ENCODE measurements at regions of chr4 and their contacts with region 1.

Region 1: DNA sequence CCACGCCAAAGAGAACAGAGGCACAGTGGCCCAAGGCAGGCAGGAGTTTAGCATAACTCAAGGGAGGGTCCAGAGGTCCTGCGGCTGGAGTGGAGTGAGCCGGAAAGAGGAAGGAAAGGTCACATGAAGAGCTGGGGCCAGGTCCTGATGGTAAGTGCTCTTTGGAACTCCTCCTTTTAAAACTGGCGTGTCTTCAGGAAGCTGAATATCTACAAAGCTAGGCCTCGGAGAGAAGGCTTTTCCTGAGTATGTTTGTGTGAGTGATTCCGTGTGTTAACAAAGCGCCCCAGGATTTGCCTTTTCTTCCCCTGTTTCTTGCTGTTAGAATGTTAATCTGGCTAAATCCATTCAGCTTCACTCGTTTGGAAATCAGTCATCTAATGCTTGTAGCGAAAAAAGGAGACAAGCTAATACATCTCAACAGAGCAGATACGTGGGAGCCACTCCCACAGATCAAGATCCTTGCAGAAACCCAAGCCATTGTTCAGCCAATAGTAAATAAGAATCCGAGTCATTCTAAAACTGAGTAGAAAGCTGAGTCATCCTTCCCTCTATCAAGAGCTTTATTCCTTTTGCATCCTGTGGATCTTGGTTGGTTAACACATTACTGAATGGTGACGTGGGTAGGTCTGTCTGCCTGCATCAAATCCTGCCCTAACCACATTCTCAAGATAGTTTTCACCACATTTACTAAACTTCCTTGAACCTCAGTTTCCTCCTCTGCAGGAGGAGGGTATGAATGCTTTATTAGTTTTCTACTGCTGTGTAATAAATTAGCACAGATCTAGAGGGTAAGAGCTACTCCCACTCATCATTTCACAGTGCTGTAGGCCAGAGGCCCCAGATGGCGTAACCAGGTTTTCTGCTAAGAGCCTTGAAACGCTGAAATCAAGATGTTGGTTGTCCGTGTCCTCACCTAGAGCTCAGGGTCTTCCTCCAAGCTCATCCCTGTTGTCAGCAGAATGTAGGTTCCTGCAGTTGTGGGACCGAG is 43.2 kb upstream of the RBM47 start:
- DNase-seq: peak; percentile 70 to 99
- H3K4me3 ChIP-seq: peak overlapping the region; percentile 56; the same call in 1 of the 2 replicates
- H3K27ac ChIP-seq: peak overlapping the region; percentile 100
- H3K4me1 ChIP-seq: peaks cover 66% of the 10 kb centered on the region
- H3K27me3 ChIP-seq: no peaks in the 10 kb centered on the region
- CTCF ChIP-seq: no peak

Region 2: GRCh38 chr4:40020221-40020943 is 652.4 kb before region 1 on chr4:
- CTCF ChIA-PET with region 1: no interaction called
- POLR2A ChIA-PET with region 1: interaction called, 10 read pairs
- intact Hi-C with region 1: no loop called
- DNase-seq: no peak
- H3K4me3 ChIP-seq: no peak overlapping the region
- H3K27ac ChIP-seq: no peak overlapping the region
- H3K4me1 ChIP-seq: 0 out of 2 replicates have a peak, but pooled peaks cover 4% of the 10 kb centered on the region
- H3K27me3 ChIP-seq: no peaks in the 10 kb centered on the region
- CTCF ChIP-seq: no peak

Region 3: DNA sequence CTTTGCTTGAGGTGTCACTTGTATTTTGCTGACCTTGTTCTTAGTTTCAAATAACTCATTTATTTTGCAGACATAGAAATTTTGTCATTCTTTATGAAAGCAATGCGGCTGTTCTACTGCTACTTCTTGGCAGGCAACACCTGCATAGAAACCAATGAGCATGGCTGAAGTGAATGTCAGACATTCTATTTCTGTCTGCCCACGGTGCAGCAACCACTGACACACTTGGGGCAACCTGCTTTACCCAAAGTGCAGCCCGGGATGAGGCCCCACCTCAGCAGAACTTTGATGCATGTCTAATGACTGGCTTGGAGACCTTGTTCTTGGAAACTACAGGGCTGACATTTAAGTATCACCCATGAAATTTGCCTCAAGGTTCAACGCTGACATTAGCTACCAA is 136.8 kb before region 1 on chr4:
- CTCF ChIA-PET with region 1: no interaction called
- POLR2A ChIA-PET with region 1: no interaction called
- intact Hi-C with region 1: no loop called
- DNase-seq: no peak
- H3K4me3 ChIP-seq: no peak overlapping the region
- H3K27ac ChIP-seq: no peak overlapping the region
- H3K4me1 ChIP-seq: peaks cover 4% of the 10 kb centered on the region; the same call in 1 of the 2 replicates
- H3K27me3 ChIP-seq: no peaks in the 10 kb centered on the region
- CTCF ChIP-seq: no peak

Region 4: GRCh38 chr4:40576631-40577480 is 96.0 kb before region 1 on chr4:
- CTCF ChIA-PET with region 1: no interaction called
- POLR2A ChIA-PET with region 1: interaction called, 29 read pairs
- intact Hi-C with region 1: no loop called
- DNase-seq: peak; percentile 76 to 97
- H3K4me3 ChIP-seq: peak overlapping the region; percentile 28; the same call in 1 of the 2 replicates
- H3K27ac ChIP-seq: peak overlapping the region; percentile 81
- H3K4me1 ChIP-seq: peaks cover 49% of the 10 kb centered on the region
- H3K27me3 ChIP-seq: no peaks in the 10 kb centered on the region
- CTCF ChIP-seq: no peak

Region 5: GRCh38 chr4:40645586-40645985 is 27.2 kb before region 1 on chr4:
- CTCF ChIA-PET with region 1: no interaction called
- POLR2A ChIA-PET with region 1: no interaction called
- intact Hi-C with region 1: no loop called
- DNase-seq: no peak
- H3K4me3 ChIP-seq: no peak overlapping the region
- H3K27ac ChIP-seq: no peak overlapping the region
- H3K4me1 ChIP-seq: no peaks in the 10 kb centered on the region; the same call in 1 of the 2 replicates
- H3K27me3 ChIP-seq: no peaks in the 10 kb centered on the region
- CTCF ChIP-seq: no peak

Region 6: DNA sequence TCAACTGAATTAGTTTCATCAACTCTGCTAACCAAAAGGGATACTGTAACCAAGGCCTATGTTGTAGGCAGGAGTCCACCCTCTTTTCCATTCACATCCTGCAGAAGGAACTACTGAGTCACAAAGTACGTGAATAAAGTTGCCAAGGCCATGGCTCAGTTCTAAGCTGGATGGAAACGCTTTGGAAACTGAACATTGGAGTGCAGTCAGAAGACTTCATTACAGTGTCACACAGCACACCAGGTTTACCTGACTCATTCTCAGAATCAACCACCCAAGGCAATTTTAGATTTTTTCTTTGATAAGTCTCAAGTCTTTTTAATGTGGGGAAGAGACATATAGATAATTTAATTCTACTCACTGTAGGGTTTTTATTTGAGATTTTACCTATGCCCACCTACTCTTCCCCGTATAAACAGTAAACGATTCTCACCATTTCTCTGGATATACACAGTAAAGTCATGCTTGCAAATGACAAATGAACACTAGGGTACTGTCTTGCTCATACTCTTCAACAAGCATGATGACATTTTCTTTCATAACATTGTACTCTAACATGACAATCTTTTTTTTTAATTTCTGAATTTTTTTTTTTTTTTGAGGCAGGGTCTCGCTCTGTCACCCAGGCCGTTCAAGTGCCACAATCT is 15.7 kb after region 1 on chr4:
- CTCF ChIA-PET with region 1: no interaction called
- POLR2A ChIA-PET with region 1: interaction called, 17 read pairs
- intact Hi-C with region 1: no loop called
- DNase-seq: peak in 1 of 2 experiments; percentile 55
- H3K4me3 ChIP-seq: no peak overlapping the region
- H3K27ac ChIP-seq: peak overlapping the region; percentile 35; the same call in 1 of the 2 replicates
- H3K4me1 ChIP-seq: peaks cover 29% of the 10 kb centered on the region
- H3K27me3 ChIP-seq: no peaks in the 10 kb centered on the region
- CTCF ChIP-seq: no peak

Region 7: DNA sequence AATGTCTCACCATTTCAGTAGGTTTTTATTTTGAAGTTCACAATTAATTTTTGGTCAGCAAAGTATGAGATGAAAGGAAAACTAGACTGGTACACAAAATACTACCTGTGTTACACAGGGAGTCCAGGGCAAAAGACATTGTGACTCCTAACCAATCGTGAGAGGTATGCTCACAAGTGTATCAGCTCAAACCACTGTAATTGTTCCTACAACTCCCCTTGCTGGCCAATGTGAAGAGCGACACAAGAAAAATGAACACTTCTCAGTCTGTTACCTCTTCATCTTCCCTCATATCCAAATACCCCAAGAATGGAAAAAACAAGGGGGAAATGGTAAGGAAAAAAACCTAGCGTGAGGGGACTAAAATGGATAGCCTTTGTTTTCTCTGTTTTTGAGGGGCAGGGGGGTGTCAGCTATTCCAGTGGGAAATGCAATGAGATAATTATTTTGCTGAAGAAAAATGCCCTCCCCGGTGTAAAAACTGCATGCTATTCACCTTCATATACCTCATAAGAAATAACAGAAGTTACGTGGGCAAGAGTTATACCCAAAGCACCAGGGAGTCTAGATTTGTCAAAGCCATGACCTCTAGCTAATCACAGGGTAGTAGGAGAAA is 46.3 kb after region 1 on chr4:
- CTCF ChIA-PET with region 1: interaction called, 6 read pairs
- POLR2A ChIA-PET with region 1: interaction called, 7 read pairs
- intact Hi-C with region 1: loop called (anchors 1 kb)
- DNase-seq: peak; percentile 28 to 83
- H3K4me3 ChIP-seq: 0 out of 2 replicates have a peak overlapping the region, but pooled peaks have one; percentile 8
- H3K27ac ChIP-seq: peak overlapping the region; percentile 66
- H3K4me1 ChIP-seq: peaks cover 59% of the 10 kb centered on the region
- H3K27me3 ChIP-seq: no peaks in the 10 kb centered on the region
- CTCF ChIP-seq: peak; percentile 76

Region 8: GRCh38 chr4:40933272-40934053 is 260.6 kb after region 1 on chr4:
- CTCF ChIA-PET with region 1: no interaction called
- POLR2A ChIA-PET with region 1: no interaction called
- intact Hi-C with region 1: no loop called
- DNase-seq: no peak
- H3K4me3 ChIP-seq: no peak overlapping the region
- H3K27ac ChIP-seq: no peak overlapping the region
- H3K4me1 ChIP-seq: no peaks in the 10 kb centered on the region
- H3K27me3 ChIP-seq: no peaks in the 10 kb centered on the region
- CTCF ChIP-seq: no peak

Measured in PC-9 (cell line).